Activated naive CD4-positive, alpha-beta T cell treated with anti-CD3 and anti-CD28 coated beads for 36 hours (primary cell): ENCODE measurements at regions of chr13 and their contacts with region 1.

Region 1: GRCh38 chr13:24683838-24684599 is 3.8 kb downstream of the ATP12A start:
- DNase-seq: peak; percentile 77
- H3K4me3 Mint-ChIP-seq: no peak overlapping the region
- H3K27ac Mint-ChIP-seq: peak overlapping the region; percentile 44
- H3K4me1 Mint-ChIP-seq: peaks cover 31% of the 10 kb centered on the region
- H3K27me3 Mint-ChIP-seq: peaks cover 40% of the 10 kb centered on the region

Region 2: GRCh38 chr13:24627944-24628343 is 56.1 kb before region 1 on chr13:
- CTCF ChIA-PET with region 1: no interaction called
- intact Hi-C with region 1: no loop called
- DNase-seq: no peak
- H3K4me3 Mint-ChIP-seq: no peak overlapping the region
- H3K27ac Mint-ChIP-seq: no peak overlapping the region
- H3K4me1 Mint-ChIP-seq: peaks cover 36% of the 10 kb centered on the region
- H3K27me3 Mint-ChIP-seq: no peaks in the 10 kb centered on the region

Region 3: GRCh38 chr13:24700539-24700938 is 16.5 kb after region 1 on chr13:
- CTCF ChIA-PET with region 1: interaction called, 10 read pairs
- intact Hi-C with region 1: no loop called
- DNase-seq: no peak
- H3K4me3 Mint-ChIP-seq: no peak overlapping the region
- H3K27ac Mint-ChIP-seq: no peak overlapping the region
- H3K4me1 Mint-ChIP-seq: peaks cover 4% of the 10 kb centered on the region
- H3K27me3 Mint-ChIP-seq: peaks cover 9% of the 10 kb centered on the region

Region 4: GRCh38 chr13:24922745-24923591 is 238.9 kb after region 1 on chr13:
- CTCF ChIA-PET with region 1: no interaction called
- intact Hi-C with region 1: loop called (anchors 2 kb)
- DNase-seq: peak; percentile 96
- H3K4me3 Mint-ChIP-seq: peak overlapping the region; percentile 94
- H3K27ac Mint-ChIP-seq: peak overlapping the region; percentile 85
- H3K4me1 Mint-ChIP-seq: peaks cover 8% of the 10 kb centered on the region
- H3K27me3 Mint-ChIP-seq: no peaks in the 10 kb centered on the region